ENCODE measurements at regions of chr10 and their contacts with region 1.

Region 1: DNA sequence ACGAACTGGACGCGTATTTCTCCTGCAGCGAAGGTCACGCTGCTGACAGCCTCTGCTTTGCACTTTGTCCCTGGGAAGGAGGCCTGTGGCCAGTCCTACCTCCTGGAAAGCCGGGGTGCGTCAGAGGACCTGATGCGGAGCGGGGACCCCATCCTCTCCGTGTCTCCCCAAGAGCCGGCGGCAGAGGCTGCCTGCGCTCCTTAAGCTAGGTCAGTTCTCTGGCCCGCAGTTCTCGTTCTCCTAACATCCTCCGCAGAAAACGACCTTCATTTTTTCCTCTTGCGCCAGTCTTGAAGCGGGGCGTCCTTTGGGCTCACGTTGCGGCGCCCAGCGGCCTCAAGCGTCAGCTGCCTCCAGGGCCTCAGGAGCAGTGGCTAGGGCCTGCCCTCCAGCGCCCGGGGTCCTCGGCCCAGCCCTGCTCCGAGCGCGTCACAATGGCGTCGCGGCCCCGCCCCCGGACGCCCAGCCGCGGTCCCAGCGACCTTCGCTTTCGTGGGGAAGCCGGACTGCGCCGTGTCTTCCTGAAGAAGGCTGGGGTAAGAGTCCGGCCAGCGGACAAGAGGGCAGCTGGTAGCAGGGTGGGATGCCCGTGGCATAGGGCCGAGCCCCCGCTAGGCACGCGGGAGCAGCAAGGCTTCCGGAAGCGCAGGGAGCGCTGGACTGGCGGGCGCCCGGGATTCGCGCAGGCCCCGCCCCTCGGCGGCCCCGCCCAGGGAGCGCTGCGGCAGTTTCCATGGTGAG is at the start of gene ZNF487:
- DNase-seq: peak; percentile 90
- H3K4me3 ChIP-seq: peak within 1 kb of the TSS; percentile 81
- H3K27ac ChIP-seq: peak within 1 kb of the TSS; percentile 95
- H3K4me1 ChIP-seq: peaks cover 29% of the 10 kb centered on the region
- H3K27me3 ChIP-seq: no peaks in the 10 kb centered on the region
- CTCF ChIP-seq: peak; percentile 35
- total RNA-seq, gene ZNF487: 2.2 TPM

Region 2: GRCh38 chr10:43390759-43391158 is 45.8 kb before region 1 on chr10:
- intact Hi-C with region 1: loop called (anchors 5 kb)
- DNase-seq: no peak
- H3K4me3 ChIP-seq: no peak overlapping the region
- H3K27ac ChIP-seq: peak overlapping the region; percentile 31
- H3K4me1 ChIP-seq: peaks cover 64% of the 10 kb centered on the region
- H3K27me3 ChIP-seq: no peaks in the 10 kb centered on the region
- CTCF ChIP-seq: peak; percentile 59

Measured in left ventricle myocardium inferior (tissue), 1 donor.